ENCODE measurements at regions of chr3 and their contacts with region 1.

Region 1: DNA sequence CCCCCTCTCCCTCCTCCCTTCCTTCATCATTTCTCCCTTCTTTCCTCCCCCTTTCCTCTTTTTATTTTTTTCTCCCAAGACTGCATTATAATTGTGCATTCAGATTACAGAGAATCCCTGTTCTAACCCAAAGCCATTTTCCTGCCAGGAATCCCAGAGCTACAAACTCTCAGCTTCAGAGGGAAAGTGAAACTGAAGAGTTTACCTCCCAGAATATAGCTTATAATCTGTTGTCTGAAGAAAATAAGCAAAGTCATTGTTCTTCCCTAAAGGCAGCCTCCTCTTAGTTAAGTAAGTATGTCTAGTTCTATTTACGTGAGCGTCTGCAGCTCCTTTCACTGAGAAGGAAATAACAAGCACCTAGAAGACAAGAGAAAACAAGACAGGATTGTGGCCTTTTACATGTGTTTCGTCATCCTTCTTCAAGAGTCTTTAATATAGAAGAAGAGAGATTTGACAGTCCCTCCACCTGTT is 97.2 kb downstream of the CHST2 start:
- DNase-seq: peak in 6 of 9 donors; percentile 18 to 51 (median 34)
- ATAC-seq: peak; percentile 48
- H3K4me3 ChIP-seq: peak overlapping the region; percentile 32
- H3K4me3 Mint-ChIP-seq: peak overlapping the region; percentile 22 to 93 (median 78)
- H3K27ac ChIP-seq: peak overlapping the region; percentile 26
- H3K27ac Mint-ChIP-seq: peak overlapping the region; percentile 58 to 91 (median 76)
- H3K4me1 ChIP-seq: peaks cover 0 to 11% of the 10 kb centered on the region in 2 donors
- H3K4me1 Mint-ChIP-seq: peaks cover 10 to 43% (median 35%) of the 10 kb centered on the region in 7 donors
- H3K27me3 ChIP-seq: no peaks in the 10 kb centered on the region
- H3K27me3 Mint-ChIP-seq: no peaks in the 10 kb centered on the region

Region 2: GRCh38 chr3:143182866-143183664 is 33.7 kb before region 1 on chr3:
- CTCF ChIA-PET with region 1: no interaction called
- POLR2A ChIA-PET with region 1: no interaction called
- intact Hi-C with region 1: loop called in 1 of 2 experiments (anchors 5 kb)
- DNase-seq: no peak
- ATAC-seq: no peak
- H3K4me3 ChIP-seq: no peak overlapping the region
- H3K4me3 Mint-ChIP-seq: peak overlapping the region in 9 of 10 donors; percentile 1 to 63 (median 38)
- H3K27ac ChIP-seq: no peak overlapping the region
- H3K27ac Mint-ChIP-seq: peak overlapping the region in 7 of 9 donors; percentile 19 to 47 (median 26)
- H3K4me1 ChIP-seq: no peaks in the 10 kb centered on the region
- H3K4me1 Mint-ChIP-seq: peaks cover 4 to 32% (median 26%) of the 10 kb centered on the region in 7 donors
- H3K27me3 ChIP-seq: no peaks in the 10 kb centered on the region
- H3K27me3 Mint-ChIP-seq: no peaks in the 10 kb centered on the region

Measured in naive thymus-derived CD4-positive, alpha-beta T cell (primary cell).